Right ventricle myocardium inferior (tissue), 1 donor: ENCODE measurements at regions of chr10 and their contacts with region 1.

Region 1: GRCh38 chr10:71850637-71851464 is at the start of gene PSAP:
- DNase-seq: peak; percentile 100
- ATAC-seq: peak; percentile 99
- total RNA-seq, gene PSAP: 1,777 TPM

Region 2: DNA sequence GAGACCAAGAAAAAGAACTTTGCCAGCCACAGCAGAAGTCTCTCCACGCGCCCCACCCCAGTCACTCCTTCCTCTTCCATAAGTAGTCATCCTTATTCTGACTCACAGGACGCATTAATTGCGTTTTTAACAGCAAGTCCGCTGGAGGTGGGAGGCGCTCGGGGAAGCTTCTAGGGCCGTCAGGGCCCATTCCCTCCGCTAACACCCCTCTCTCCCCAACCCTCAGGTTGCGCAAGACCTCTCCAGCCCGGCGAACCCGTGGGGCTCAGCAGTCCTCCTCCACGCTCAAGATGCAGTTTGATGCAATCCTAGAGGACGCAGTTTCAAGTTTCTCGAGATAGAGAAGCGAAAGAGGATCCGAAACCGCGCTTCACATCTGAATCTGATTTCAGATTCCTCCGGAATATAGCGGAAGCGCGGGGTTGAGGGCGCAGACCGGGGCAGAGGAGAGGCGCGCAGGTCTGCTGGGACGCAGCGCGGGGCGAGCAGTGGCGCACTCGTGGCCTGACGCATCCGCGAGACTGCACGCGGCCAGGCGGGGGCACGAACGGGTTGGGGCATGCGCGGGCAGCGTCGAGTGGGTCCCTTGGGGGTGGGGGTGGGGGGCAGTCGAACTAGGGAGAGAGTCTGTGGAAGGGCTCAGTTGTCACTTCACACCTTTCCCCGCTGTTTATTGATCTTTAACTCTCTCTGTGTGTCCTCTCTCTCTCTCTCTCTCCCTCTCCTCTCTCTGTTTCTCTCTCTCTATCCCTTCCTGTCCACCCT is 38.0 kb after region 1 on chr10:
- intact Hi-C with region 1: loop called (anchors 5 kb)
- DNase-seq: peak; percentile 92
- ATAC-seq: peak; percentile 96